HepG2 (cell line): ENCODE measurements at regions of chrX and their contacts with region 1.

Region 1: DNA sequence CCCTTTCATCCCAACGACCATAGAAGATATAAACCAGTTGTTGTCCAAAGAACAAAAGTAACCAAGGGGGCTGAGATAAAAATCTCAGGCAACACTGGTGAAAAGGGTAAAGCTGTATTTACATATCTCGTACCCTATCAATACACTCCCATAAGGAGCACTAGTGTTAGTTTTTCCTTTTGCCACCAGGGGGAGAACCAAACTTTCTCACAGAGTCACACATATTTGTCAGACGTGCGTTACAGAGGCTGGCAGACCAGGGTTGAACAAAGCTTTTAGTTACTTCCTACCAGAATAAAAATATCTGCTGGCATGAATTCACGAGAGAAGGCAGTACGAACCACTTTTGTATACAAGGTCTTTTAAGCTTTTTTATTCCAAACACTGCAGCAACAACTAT is 88.3 kb downstream of the AMELX start:
- DNase-seq: peak; percentile 25
- ATAC-seq: peak; percentile 82
- H3K4me3 ChIP-seq: no peak overlapping the region
- H3K27ac ChIP-seq: no peak overlapping the region
- H3K4me1 ChIP-seq: no peaks in the 10 kb centered on the region
- H3K27me3 ChIP-seq: no peaks in the 10 kb centered on the region
- CTCF ChIP-seq: peak; percentile 50
- EP300 ChIP-seq: no peak
- POLR2A ChIP-seq: no peak
- RAD21 ChIP-seq: no peak

Region 2: GRCh38 chrX:11143931-11144678 is 237.4 kb before region 1 on chrX:
- CTCF ChIA-PET with region 1: no interaction called
- POLR2A ChIA-PET with region 1: no interaction called
- in situ Hi-C with region 1: no loop called
- intact Hi-C with region 1: loop called (anchors 10 kb)
- DNase-seq: peak; percentile 55
- ATAC-seq: peak; percentile 85
- H3K4me3 ChIP-seq: no peak overlapping the region
- H3K27ac ChIP-seq: no peak overlapping the region
- H3K4me1 ChIP-seq: no peaks in the 10 kb centered on the region
- H3K27me3 ChIP-seq: no peaks in the 10 kb centered on the region; a peak in 1 of 5 replicates
- CTCF ChIP-seq: peak; percentile 70
- EP300 ChIP-seq: no peak
- POLR2A ChIP-seq: no peak
- RAD21 ChIP-seq: no peak

Region 3: GRCh38 chrX:11193035-11193469 is 188.4 kb before region 1 on chrX:
- CTCF ChIA-PET with region 1: no interaction called
- POLR2A ChIA-PET with region 1: no interaction called
- in situ Hi-C with region 1: no loop called
- intact Hi-C with region 1: no loop called
- DNase-seq: no peak
- ATAC-seq: no peak
- H3K4me3 ChIP-seq: no peak overlapping the region
- H3K27ac ChIP-seq: no peak overlapping the region
- H3K4me1 ChIP-seq: no peaks in the 10 kb centered on the region
- H3K27me3 ChIP-seq: no peaks in the 10 kb centered on the region
- CTCF ChIP-seq: no peak
- EP300 ChIP-seq: no peak
- POLR2A ChIP-seq: no peak
- RAD21 ChIP-seq: no peak

Region 4: GRCh38 chrX:11267425-11267824 is 114.0 kb before region 1 on chrX:
- CTCF ChIA-PET with region 1: no interaction called
- POLR2A ChIA-PET with region 1: no interaction called
- in situ Hi-C with region 1: no loop called
- intact Hi-C with region 1: no loop called
- DNase-seq: peak; percentile 0
- ATAC-seq: no peak
- H3K4me3 ChIP-seq: no peak overlapping the region
- H3K27ac ChIP-seq: no peak overlapping the region
- H3K4me1 ChIP-seq: peaks cover 13% of the 10 kb centered on the region; the same call in 1 of the 2 replicates
- H3K27me3 ChIP-seq: no peaks in the 10 kb centered on the region
- CTCF ChIP-seq: no peak
- EP300 ChIP-seq: no peak
- POLR2A ChIP-seq: no peak
- RAD21 ChIP-seq: no peak

Region 5: GRCh38 chrX:11458170-11458569 is 76.7 kb after region 1 on chrX:
- CTCF ChIA-PET with region 1: no interaction called
- POLR2A ChIA-PET with region 1: no interaction called
- in situ Hi-C with region 1: no loop called
- intact Hi-C with region 1: no loop called
- DNase-seq: no peak
- ATAC-seq: no peak
- H3K4me3 ChIP-seq: no peak overlapping the region
- H3K27ac ChIP-seq: no peak overlapping the region
- H3K4me1 ChIP-seq: no peaks in the 10 kb centered on the region
- H3K27me3 ChIP-seq: no peaks in the 10 kb centered on the region
- CTCF ChIP-seq: no peak
- EP300 ChIP-seq: no peak
- POLR2A ChIP-seq: no peak
- RAD21 ChIP-seq: no peak

Region 6: GRCh38 chrX:11525685-11526084 is 144.2 kb after region 1 on chrX:
- CTCF ChIA-PET with region 1: no interaction called
- POLR2A ChIA-PET with region 1: no interaction called
- in situ Hi-C with region 1: no loop called
- intact Hi-C with region 1: no loop called
- DNase-seq: no peak
- ATAC-seq: no peak
- H3K4me3 ChIP-seq: no peak overlapping the region
- H3K27ac ChIP-seq: no peak overlapping the region
- H3K4me1 ChIP-seq: no peaks in the 10 kb centered on the region
- H3K27me3 ChIP-seq: no peaks in the 10 kb centered on the region
- CTCF ChIP-seq: no peak
- EP300 ChIP-seq: no peak
- POLR2A ChIP-seq: no peak
- RAD21 ChIP-seq: no peak

Region 7: GRCh38 chrX:11770320-11770719 is 388.9 kb after region 1 on chrX:
- CTCF ChIA-PET with region 1: no interaction called
- POLR2A ChIA-PET with region 1: no interaction called
- in situ Hi-C with region 1: no loop called
- intact Hi-C with region 1: loop called (anchors 5 kb)
- DNase-seq: peak; percentile 23
- ATAC-seq: peak; percentile 84
- H3K4me3 ChIP-seq: no peak overlapping the region
- H3K27ac ChIP-seq: no peak overlapping the region
- H3K4me1 ChIP-seq: no peaks in the 10 kb centered on the region
- H3K27me3 ChIP-seq: no peaks in the 10 kb centered on the region
- CTCF ChIP-seq: peak; percentile 73
- EP300 ChIP-seq: no peak
- POLR2A ChIP-seq: no peak
- RAD21 ChIP-seq: no peak